Transverse colon (tissue), 4 donors: ENCODE measurements at regions of chr7 and their contacts with region 1.

Region 1: GRCh38 chr7:132569884-132570614 is 6.2 kb downstream of the PLXNA4 start:
- DNase-seq: no peak
- H3K4me3 ChIP-seq: no peak overlapping the region
- H3K27ac ChIP-seq: no peak overlapping the region
- H3K4me1 ChIP-seq: peaks cover 0 to 2% (median under 1%) of the 10 kb centered on the region in 4 donors
- H3K27me3 ChIP-seq: peaks cover 76% of the 10 kb centered on the region
- CTCF ChIP-seq: no peak
- EP300 ChIP-seq: no peak
- POLR2A ChIP-seq: no peak

Region 2: GRCh38 chr7:132311733-132312132 is 258.3 kb before region 1 on chr7:
- in situ Hi-C with region 1: loop called in 2 of 4 experiments (anchors 5 to 10 kb)
- intact Hi-C with region 1: no loop called
- DNase-seq: no peak
- H3K4me3 ChIP-seq: no peak overlapping the region
- H3K27ac ChIP-seq: no peak overlapping the region
- H3K4me1 ChIP-seq: no peaks in the 10 kb centered on the region
- H3K27me3 ChIP-seq: peaks cover 9% of the 10 kb centered on the region
- CTCF ChIP-seq: no peak
- EP300 ChIP-seq: no peak
- POLR2A ChIP-seq: no peak